WTC11 (cell line): ENCODE measurements at regions of chr1 and their contacts with region 1.

Region 1: GRCh38 chr1:21368515-21369289 is 71.2 kb upstream of the NBPF3 start:
- DNase-seq: peak; percentile 85
- ATAC-seq: peak; percentile 85
- H3K4me3 Mint-ChIP-seq: no peak overlapping the region
- H3K27ac Mint-ChIP-seq: no peak overlapping the region
- H3K4me1 Mint-ChIP-seq: 0 out of 2 replicates have a peak, but pooled peaks cover 3% of the 10 kb centered on the region
- H3K27me3 Mint-ChIP-seq: no peaks in the 10 kb centered on the region
- CTCF ChIP-seq: peak; percentile 91

Region 2: DNA sequence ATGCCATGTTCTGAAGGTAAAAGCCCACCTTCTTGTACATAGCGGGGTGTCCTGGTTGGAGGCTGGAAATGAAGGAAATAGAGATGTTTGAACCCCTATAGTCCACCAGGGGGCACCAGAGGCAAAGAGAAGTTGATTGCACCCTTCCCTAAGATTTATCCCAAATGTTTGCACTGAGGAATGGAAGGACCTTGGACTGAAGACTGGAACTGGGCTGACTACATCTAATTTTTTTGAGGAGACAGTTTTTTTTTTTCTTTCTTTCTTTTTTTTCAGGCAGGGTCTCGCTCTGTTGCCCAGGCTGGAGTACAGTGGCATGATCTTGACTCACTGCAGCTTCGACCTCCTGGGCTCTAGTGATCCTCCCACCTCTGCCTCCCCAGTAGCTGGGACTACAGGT is 136.7 kb before region 1 on chr1:
- CTCF ChIA-PET with region 1: interaction called, 115 read pairs
- POLR2A ChIA-PET with region 1: no interaction called
- DNase-seq: peak; percentile 37
- ATAC-seq: peak; percentile 66
- H3K4me3 Mint-ChIP-seq: no peak overlapping the region
- H3K27ac Mint-ChIP-seq: no peak overlapping the region
- H3K4me1 Mint-ChIP-seq: peaks cover 6% of the 10 kb centered on the region; the same call in 1 of the 2 replicates
- H3K27me3 Mint-ChIP-seq: no peaks in the 10 kb centered on the region
- CTCF ChIP-seq: peak; percentile 65

Region 3: DNA sequence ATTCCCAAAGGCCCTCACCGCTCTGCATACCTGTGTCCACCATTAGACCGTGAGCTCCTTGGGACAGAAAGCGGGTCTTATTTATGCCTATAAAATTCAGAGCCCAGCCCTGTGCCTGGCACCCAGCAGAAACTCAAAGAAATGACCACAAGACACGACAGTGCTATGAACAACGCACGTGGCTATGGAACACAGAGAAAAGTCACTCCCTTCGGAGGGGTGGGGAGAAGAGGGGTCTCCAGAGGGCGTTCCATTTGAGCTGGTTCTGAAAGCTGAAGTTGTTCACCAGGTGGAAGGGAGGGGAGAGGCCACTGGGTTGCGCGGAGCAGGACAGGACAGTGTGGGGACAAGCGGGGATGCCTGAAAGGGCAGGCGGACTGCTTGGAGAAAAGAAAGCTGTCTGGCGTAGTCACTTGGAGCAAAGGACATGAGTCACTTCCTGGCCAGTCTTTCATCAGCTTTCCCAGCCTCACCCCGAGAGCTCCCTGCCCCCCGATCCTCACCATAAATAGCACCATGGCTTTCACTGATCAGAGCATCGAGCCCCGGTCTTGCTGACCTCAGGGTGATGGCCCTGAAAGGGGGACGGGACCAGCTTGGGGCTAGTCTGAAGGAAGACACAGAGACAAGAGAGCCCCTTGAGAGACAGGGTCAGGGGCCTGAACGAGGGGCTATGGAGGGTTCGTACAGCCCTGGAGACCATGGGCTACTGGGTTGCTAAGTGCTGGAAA is 107.0 kb before region 1 on chr1:
- CTCF ChIA-PET with region 1: interaction called, 255 read pairs
- POLR2A ChIA-PET with region 1: no interaction called
- DNase-seq: no peak
- ATAC-seq: peak; percentile 25
- H3K4me3 Mint-ChIP-seq: no peak overlapping the region
- H3K27ac Mint-ChIP-seq: peak overlapping the region; percentile 81
- H3K4me1 Mint-ChIP-seq: peaks cover 15% of the 10 kb centered on the region
- H3K27me3 Mint-ChIP-seq: no peaks in the 10 kb centered on the region
- CTCF ChIP-seq: no peak

Region 4: GRCh38 chr1:21318714-21319159 is 50.0 kb before region 1 on chr1:
- CTCF ChIA-PET with region 1: interaction called, 22 read pairs
- POLR2A ChIA-PET with region 1: no interaction called
- DNase-seq: no peak
- ATAC-seq: no peak
- H3K4me3 Mint-ChIP-seq: no peak overlapping the region
- H3K27ac Mint-ChIP-seq: peak overlapping the region; percentile 35; the same call in 1 of the 2 replicates
- H3K4me1 Mint-ChIP-seq: peaks cover 80% of the 10 kb centered on the region
- H3K27me3 Mint-ChIP-seq: no peaks in the 10 kb centered on the region
- CTCF ChIP-seq: no peak

Region 5: DNA sequence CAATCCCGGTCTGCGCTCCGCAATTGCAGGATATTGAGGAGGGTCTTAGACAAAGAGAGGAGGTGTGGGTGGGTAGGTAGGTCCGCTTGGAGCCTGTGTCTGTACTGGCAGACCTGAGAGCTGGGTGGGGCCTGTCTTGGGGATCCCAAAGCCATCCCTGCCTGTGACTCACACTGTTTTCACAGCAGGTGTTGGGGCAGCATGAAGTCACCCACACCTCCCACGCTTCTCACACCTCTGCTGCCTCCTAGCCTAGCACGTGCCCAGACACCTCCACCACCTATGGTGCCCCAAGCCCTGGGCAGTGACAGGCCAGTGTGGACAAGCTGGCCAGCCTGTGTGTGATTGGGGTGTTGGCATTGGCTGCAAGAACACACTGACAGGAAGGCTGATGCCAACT is 12.7 kb before region 1 on chr1:
- CTCF ChIA-PET with region 1: interaction called, 16 read pairs
- POLR2A ChIA-PET with region 1: interaction called, 3 read pairs
- DNase-seq: no peak
- ATAC-seq: no peak
- H3K4me3 Mint-ChIP-seq: no peak overlapping the region
- H3K27ac Mint-ChIP-seq: no peak overlapping the region; the same call in 1 of the 2 replicates
- H3K4me1 Mint-ChIP-seq: no peaks in the 10 kb centered on the region
- H3K27me3 Mint-ChIP-seq: no peaks in the 10 kb centered on the region; the same call in 1 of the 2 replicates
- CTCF ChIP-seq: no peak

Region 6: DNA sequence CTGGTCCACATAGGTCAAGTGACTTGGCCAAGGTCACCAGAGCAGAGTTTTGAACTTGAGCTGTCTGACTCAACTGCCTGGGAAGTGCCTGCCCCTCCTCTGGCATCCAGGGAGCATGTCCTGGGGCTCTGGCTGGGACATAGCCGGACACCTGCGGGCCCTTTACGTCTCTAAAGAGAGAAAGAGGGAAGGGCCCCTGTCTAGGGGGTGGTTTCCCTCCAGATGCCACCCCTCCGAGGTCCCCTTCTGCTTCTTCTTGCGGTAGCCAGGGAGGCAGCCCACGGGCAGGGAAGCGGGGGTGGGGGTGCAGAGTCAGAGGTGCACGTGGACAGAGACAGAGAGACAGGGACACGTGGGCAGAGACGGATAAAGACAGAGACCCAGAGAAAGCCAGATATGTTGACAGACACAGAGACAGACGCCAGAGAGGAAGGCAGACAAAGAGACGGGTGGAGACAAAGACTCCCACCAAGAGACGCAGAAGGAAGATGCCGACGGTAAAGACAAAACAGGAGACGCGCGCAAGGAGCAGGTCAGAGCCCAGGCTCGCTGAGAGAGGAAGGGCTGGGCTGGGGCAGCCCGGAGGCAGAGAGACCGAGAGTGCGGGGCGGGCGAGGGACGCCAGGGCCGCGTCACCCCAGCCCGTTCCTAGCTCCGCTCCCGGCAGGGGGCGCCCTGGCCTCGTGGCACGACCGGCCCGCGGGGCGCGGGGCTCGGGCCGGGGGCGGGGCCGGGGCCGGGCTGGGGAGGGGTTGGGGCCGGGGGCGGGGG is 140.1 kb after region 1 on chr1:
- CTCF ChIA-PET with region 1: interaction called, 16 read pairs
- POLR2A ChIA-PET with region 1: no interaction called
- DNase-seq: peak; percentile 92
- ATAC-seq: peak; percentile 90
- H3K4me3 Mint-ChIP-seq: peak overlapping the region; percentile 69
- H3K27ac Mint-ChIP-seq: no peak overlapping the region
- H3K4me1 Mint-ChIP-seq: peaks cover 34% of the 10 kb centered on the region
- H3K27me3 Mint-ChIP-seq: peaks cover 21% of the 10 kb centered on the region
- CTCF ChIP-seq: no peak